HEK293T (cell line): ENCODE measurements at regions of chr2 and their contacts with region 1.

Region 1: GRCh38 chr2:16890081-16890480 is 224.4 kb upstream of the CYRIA start:
- DNase-seq: no peak

Region 2: GRCh38 chr2:16943279-16943958 is 53.3 kb after region 1 on chr2:
- CTCF ChIA-PET with region 1: interaction called, 10 read pairs
- POLR2A ChIA-PET with region 1: no interaction called
- DNase-seq: no peak